A673 (cell line): ENCODE measurements at regions of chr16 and their contacts with region 1.

Region 1: GRCh38 chr16:68310761-68311511 is at the starts of genes PRMT7 and SLC7A6OS:
- DNase-seq: peak; percentile 97
- H3K4me3 ChIP-seq: peak within 1 kb of the TSS; percentile 71
- H3K27ac ChIP-seq: peak within 1 kb of the TSS; percentile 88
- H3K4me1 ChIP-seq: peaks cover 15% of the 10 kb centered on the region
- H3K27me3 ChIP-seq: no peaks in the 10 kb centered on the region
- CTCF ChIP-seq: no peak
- total RNA-seq, gene PRMT7: 60.2 and 66.2 TPM in 2 replicates
- total RNA-seq, gene SLC7A6OS: 24.5 and 25.3 TPM in 2 replicates

Region 2: GRCh38 chr16:67719048-67719777 is 591.7 kb before region 1 on chr16 and contains the start of gene GFOD2:
- CTCF ChIA-PET with region 1: no interaction called
- POLR2A ChIA-PET with region 1: interaction called, 14 read pairs
- intact Hi-C with region 1: no loop called
- DNase-seq: peak; percentile 95
- H3K4me3 ChIP-seq: peak within 1 kb of the TSS; percentile 93
- H3K27ac ChIP-seq: peak within 1 kb of the TSS; percentile 87
- H3K4me1 ChIP-seq: peaks cover 14% of the 10 kb centered on the region
- H3K27me3 ChIP-seq: no peaks in the 10 kb centered on the region
- CTCF ChIP-seq: no peak
- total RNA-seq, gene GFOD2: 22.6 and 25.1 TPM in 2 replicates

Region 3: GRCh38 chr16:68264128-68265077 is 46.5 kb before region 1 on chr16 and contains the start of gene SLC7A6:
- CTCF ChIA-PET with region 1: interaction called, 7 read pairs
- POLR2A ChIA-PET with region 1: no interaction called
- intact Hi-C with region 1: loop called (anchors 5 kb)
- DNase-seq: peak; percentile 82
- H3K4me3 ChIP-seq: peak within 1 kb of the TSS; percentile 89
- H3K27ac ChIP-seq: peak within 1 kb of the TSS; percentile 93
- H3K4me1 ChIP-seq: peaks cover 11% of the 10 kb centered on the region
- H3K27me3 ChIP-seq: no peaks in the 10 kb centered on the region
- CTCF ChIP-seq: peak; percentile 79
- total RNA-seq, gene SLC7A6: 43.6 and 58.7 TPM in 2 replicates